Activated CD4-positive, alpha-beta memory T cell treated with anti-CD3 and anti-CD28 coated beads, Interleukin-2, amount 10 ng/mL, durations not matched to agents 7 days and 5 days (primary cell): ENCODE measurements at regions of chr18 and their contacts with region 1.

Region 1: DNA sequence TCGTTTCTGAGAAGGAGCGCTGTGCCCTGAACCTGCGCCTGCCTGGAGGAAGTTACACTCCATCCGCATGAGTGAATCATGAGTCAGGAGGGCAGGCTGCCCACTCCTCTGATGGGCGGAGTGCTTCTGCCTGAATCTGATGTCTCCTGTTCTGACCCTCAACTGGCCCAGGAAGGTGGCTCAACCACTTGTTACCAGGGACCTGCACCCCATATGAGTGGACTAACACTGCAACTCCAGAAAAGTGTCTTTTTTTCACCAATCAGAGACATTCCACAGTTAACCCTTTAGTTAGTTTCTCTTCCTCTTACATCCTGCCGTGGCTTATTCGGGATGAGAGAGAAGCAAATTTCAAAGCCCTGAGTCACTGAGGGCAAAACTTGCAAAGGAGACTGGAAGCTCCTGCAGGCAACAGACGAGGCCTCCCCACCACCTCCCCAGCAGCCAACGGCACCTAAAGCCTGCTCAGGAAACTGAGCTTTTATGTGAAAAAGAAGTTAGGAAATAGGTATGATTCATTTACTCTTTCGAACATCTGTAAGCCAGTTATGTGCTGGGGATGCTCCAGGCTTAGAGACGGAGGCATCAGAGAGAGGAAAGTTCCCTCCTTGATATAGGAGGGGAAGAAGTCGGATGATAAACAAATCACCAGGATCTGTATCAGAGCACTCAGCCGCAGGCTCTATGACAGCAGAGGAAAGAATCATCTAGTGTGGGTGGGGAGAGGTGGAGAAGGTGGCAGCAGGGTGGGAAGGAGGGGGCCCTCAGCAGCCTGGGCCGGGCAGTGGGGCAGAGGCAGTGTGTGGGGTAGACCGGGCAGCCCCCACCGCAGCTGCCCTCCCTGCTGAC is 30.9 kb downstream of the MBP start:
- DNase-seq: peak; percentile 61
- H3K4me3 Mint-ChIP-seq: peak overlapping the region; percentile 69
- H3K27ac Mint-ChIP-seq: peak overlapping the region; percentile 99
- H3K4me1 Mint-ChIP-seq: peaks cover 95% of the 10 kb centered on the region
- H3K27me3 Mint-ChIP-seq: no peaks in the 10 kb centered on the region

Region 2: DNA sequence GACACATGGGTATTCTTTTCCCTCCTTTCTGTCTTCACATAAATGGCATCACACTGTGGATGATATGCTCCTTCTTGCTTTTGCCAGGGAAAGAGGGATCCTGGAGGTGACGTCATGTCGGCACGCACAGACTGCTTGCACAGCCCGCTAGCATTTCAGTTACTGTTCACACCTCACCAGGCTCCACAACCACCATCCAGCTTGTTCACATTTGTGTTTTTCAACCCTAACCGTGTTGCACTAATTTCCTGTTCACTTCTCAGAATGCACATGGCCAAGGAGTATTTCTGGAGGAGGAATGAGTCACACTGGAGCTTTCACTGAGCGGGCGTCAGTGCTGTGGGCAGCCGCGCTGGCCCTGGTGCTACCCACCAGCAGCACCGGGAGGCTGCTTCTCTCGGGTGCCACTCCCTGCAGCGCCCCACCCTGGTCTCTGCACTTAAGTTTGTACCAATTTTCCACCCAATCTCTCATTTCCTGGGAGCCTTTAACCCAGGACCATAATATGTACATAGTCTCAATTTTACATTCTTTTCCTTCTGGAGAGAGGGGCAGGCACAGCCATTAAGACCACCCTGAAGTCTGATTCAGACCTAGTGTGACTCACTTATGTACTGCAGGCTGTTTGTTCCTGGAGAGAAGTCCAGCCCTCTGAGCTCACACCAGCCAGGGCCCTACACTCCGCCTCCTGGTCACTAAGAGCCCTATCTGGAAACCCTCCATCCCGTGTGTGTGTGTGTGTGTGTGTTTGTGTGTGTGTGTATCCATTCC is 34.2 kb before region 1 on chr18:
- CTCF ChIA-PET with region 1: interaction called, 30 read pairs
- POLR2A ChIA-PET with region 1: interaction called, 437 read pairs
- DNase-seq: peak; percentile 82
- H3K4me3 Mint-ChIP-seq: peak overlapping the region; percentile 53
- H3K27ac Mint-ChIP-seq: peak overlapping the region; percentile 99
- H3K4me1 Mint-ChIP-seq: peaks cover 100% of the 10 kb centered on the region
- H3K27me3 Mint-ChIP-seq: no peaks in the 10 kb centered on the region

Region 3: GRCh38 chr18:77091366-77091765 is 10.3 kb before region 1 on chr18:
- CTCF ChIA-PET with region 1: no interaction called
- POLR2A ChIA-PET with region 1: no interaction called
- DNase-seq: no peak
- H3K4me3 Mint-ChIP-seq: no peak overlapping the region
- H3K27ac Mint-ChIP-seq: no peak overlapping the region
- H3K4me1 Mint-ChIP-seq: peaks cover 44% of the 10 kb centered on the region
- H3K27me3 Mint-ChIP-seq: no peaks in the 10 kb centered on the region

Region 4: DNA sequence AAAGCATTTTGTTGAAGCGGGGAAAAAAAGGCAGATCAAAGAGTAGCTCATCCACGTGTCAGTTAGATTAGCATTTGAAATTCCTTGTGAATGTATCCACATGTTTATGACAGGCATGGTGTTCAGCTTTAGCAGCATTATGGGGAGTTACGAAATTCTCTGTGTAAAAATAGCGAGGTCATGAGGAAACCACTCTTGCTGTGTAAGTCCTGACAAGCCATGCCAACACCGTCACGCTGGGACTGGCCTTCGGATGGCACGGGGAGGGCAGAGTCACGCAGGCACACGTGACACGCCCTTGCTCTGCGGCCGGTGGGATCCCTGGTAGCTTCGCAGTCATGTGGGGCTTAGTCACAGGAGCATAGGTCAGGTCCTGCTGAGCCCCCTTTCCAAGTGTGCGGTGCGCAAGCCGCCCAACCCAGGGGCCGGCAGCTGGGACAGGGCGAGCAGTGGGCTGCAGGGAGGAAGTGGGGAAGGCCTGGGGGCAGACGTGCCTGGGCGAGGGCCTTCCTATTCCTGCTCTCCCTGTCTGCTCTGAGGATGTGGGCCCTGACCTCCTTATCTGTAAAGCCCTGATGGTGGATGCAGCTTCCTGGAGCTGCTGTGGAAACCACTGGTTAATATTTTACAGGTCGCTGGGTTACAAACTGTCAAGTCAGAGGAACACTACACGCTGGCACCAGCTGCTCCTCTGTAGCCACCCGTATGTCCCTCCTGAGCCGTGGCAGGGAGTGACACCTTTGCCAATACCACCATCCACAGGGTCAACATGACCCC is 13.0 kb after region 1 on chr18:
- CTCF ChIA-PET with region 1: no interaction called
- POLR2A ChIA-PET with region 1: interaction called, 80 read pairs
- DNase-seq: no peak
- H3K4me3 Mint-ChIP-seq: no peak overlapping the region
- H3K27ac Mint-ChIP-seq: peak overlapping the region; percentile 24
- H3K4me1 Mint-ChIP-seq: peaks cover 73% of the 10 kb centered on the region
- H3K27me3 Mint-ChIP-seq: no peaks in the 10 kb centered on the region

Region 5: DNA sequence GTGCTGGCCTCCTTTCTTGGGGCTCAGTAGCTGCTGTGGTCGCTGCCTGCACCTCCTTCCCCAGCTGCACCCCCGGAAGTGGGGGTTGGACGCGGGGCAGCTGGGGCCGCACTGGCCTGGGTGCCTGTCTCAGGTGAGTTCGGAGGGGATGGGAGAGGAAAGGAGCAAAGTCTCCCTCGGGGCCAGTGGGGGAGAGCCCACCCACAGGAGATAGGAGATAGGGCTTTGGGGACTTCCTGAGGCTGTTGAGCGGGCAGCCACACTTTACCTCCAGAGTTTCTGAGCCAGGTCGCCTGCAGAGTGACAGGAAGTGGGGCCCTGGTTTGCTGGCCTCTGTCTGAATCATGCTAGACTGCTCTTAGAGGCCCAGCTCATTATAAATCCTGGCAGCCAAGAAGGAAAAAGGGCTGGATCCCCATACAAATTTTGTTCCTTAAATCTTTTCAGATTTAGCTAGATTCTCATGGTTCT is 22.9 kb after region 1 on chr18:
- CTCF ChIA-PET with region 1: interaction called, 20 read pairs
- POLR2A ChIA-PET with region 1: interaction called, 137 read pairs
- DNase-seq: peak; percentile 73
- H3K4me3 Mint-ChIP-seq: peak overlapping the region; percentile 61
- H3K27ac Mint-ChIP-seq: peak overlapping the region; percentile 78
- H3K4me1 Mint-ChIP-seq: peaks cover 84% of the 10 kb centered on the region
- H3K27me3 Mint-ChIP-seq: no peaks in the 10 kb centered on the region

Region 6: GRCh38 chr18:77132371-77133050 is 30.9 kb after region 1 on chr18 and contains the start of gene MBP:
- CTCF ChIA-PET with region 1: interaction called, 4 read pairs
- POLR2A ChIA-PET with region 1: interaction called, 137 read pairs
- DNase-seq: peak; percentile 80
- H3K4me3 Mint-ChIP-seq: peak within 1 kb of the TSS; percentile 96
- H3K27ac Mint-ChIP-seq: peak within 1 kb of the TSS; percentile 88
- H3K4me1 Mint-ChIP-seq: peaks cover 62% of the 10 kb centered on the region
- H3K27me3 Mint-ChIP-seq: no peaks in the 10 kb centered on the region
- total RNA-seq, gene MBP: 81.4 to 95.3 TPM

Region 7: DNA sequence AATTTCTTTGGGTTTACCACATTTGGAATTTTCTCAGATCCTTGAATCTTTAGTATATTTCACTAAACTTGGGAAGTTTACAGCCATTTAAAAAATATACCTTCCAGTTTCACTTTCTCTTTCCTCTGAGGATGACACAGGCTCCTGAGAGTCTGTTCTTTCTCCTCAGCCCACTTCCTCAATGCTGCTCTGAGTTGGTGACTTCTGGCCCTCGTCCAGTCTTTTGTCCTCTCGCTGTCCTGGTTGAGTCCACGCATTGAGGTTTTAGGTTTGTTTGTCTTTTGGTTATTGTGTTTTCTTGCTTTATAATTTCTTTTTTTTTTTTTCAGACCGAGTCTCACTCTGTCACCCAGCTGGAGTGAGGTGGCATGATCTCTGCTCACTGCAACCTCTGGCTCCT is 107.3 kb after region 1 on chr18:
- CTCF ChIA-PET with region 1: interaction called, 7 read pairs
- POLR2A ChIA-PET with region 1: interaction called, 12 read pairs
- DNase-seq: peak; percentile 33
- H3K4me3 Mint-ChIP-seq: peak overlapping the region; percentile 83
- H3K27ac Mint-ChIP-seq: peak overlapping the region; percentile 84
- H3K4me1 Mint-ChIP-seq: peaks cover 50% of the 10 kb centered on the region
- H3K27me3 Mint-ChIP-seq: no peaks in the 10 kb centered on the region